B cell (primary cell): ENCODE measurements at regions of chr12 and their contacts with region 1.

Region 1: DNA sequence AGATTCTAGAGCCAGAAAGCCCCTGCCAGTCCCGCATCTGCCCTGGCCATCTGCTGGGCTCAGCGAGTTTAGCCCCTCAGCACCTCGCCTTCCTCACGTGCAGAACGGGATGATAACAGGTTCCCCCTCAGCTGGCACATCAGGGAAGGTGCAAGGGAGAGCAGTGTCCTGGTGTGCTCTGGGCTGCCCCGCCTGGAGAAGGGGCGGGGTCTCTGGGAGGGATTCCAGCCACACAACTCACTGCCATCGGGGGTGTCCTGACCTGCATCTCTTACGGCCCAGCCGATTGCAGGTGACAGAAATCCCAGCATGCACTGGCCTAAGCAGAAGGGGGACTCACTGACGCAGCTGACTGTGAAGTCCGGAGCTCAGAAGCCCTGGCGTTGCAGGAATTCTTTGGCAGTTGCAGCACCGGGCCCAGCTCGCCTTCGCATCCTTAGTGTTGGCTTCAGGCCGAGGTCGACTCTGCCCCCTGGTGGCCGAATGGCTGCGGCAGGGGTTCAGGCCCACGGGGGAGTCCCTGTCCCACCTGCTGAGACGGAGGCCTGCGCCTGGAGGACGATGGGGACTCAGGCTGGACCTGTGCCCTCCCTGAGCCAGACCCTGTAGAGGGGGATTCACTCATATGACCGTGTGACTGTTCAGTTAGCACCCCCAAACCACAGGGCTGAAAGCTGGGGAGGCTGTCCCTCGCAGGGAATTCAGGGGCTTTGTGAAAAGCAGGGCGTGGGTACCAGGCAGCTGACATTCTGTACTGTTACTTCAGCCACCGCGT is 178.6 kb downstream of the ADGRD1 start:
- DNase-seq: peak; percentile 80
- ATAC-seq: peak; percentile 68
- H3K4me3 ChIP-seq: no peak overlapping the region
- H3K4me3 Mint-ChIP-seq: no peak overlapping the region
- H3K27ac ChIP-seq: no peak overlapping the region
- H3K27ac Mint-ChIP-seq: peak overlapping the region; percentile 53
- H3K4me1 ChIP-seq: peaks cover 0 to 3% of the 10 kb centered on the region in 2 donors
- H3K4me1 Mint-ChIP-seq: no peaks in the 10 kb centered on the region
- H3K27me3 ChIP-seq: peaks cover 0 to 7% (median 0%) of the 10 kb centered on the region in 4 experiments
- H3K27me3 Mint-ChIP-seq: no peaks in the 10 kb centered on the region
- CTCF ChIP-seq: peak; percentile 91

Region 2: GRCh38 chr12:129276361-129277060 is 1855.8 kb before region 1 on chr12:
- CTCF ChIA-PET with region 1: no interaction called
- POLR2A ChIA-PET with region 1: no interaction called
- intact Hi-C with region 1: no loop called
- DNase-seq: no peak
- ATAC-seq: no peak
- H3K4me3 ChIP-seq: no peak overlapping the region
- H3K4me3 Mint-ChIP-seq: no peak overlapping the region
- H3K27ac ChIP-seq: no peak overlapping the region
- H3K27ac Mint-ChIP-seq: no peak overlapping the region
- H3K4me1 ChIP-seq: no peaks in the 10 kb centered on the region
- H3K4me1 Mint-ChIP-seq: no peaks in the 10 kb centered on the region
- H3K27me3 ChIP-seq: no peaks in the 10 kb centered on the region
- H3K27me3 Mint-ChIP-seq: no peaks in the 10 kb centered on the region
- CTCF ChIP-seq: no peak

Region 3: DNA sequence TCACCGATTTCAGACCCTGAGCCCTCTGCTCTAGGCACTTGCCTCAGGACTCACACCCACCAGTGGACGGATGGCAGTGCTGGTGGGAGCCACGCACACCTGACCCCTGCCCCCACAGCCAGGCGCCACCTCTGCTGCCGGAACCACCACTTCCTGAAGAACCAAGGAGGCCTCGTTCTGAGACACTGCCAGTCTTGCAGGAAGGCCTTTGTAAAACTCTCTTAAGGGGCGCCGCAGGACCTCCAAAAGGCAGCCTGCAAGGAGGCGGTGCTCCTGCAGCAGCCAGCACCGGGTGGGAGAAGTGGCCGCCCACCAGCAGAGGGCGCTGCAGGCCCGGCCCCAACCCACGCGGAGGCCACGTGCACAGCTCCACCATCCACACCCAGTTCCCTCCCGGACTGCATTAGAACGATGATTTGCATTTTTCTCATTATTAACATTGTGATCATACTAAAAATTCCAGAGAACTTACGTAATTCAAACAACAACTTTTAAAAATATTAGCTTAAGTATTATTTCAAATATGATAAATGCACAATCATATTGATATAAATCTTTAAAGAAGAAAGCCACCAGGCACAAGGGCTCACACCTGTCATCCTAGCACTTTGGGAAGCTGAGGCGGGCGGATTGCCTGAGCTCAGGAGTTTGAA is 306.0 kb before region 1 on chr12:
- CTCF ChIA-PET with region 1: interaction called, 19 read pairs
- POLR2A ChIA-PET with region 1: no interaction called
- intact Hi-C with region 1: no loop called
- DNase-seq: peak; percentile 48
- ATAC-seq: peak; percentile 31
- H3K4me3 ChIP-seq: no peak overlapping the region
- H3K4me3 Mint-ChIP-seq: no peak overlapping the region
- H3K27ac ChIP-seq: no peak overlapping the region
- H3K27ac Mint-ChIP-seq: no peak overlapping the region
- H3K4me1 ChIP-seq: peaks cover 0 to 5% of the 10 kb centered on the region in 2 donors
- H3K4me1 Mint-ChIP-seq: peaks cover 12% of the 10 kb centered on the region
- H3K27me3 ChIP-seq: no peaks in the 10 kb centered on the region
- H3K27me3 Mint-ChIP-seq: no peaks in the 10 kb centered on the region
- CTCF ChIP-seq: peak; percentile 75

Region 4: DNA sequence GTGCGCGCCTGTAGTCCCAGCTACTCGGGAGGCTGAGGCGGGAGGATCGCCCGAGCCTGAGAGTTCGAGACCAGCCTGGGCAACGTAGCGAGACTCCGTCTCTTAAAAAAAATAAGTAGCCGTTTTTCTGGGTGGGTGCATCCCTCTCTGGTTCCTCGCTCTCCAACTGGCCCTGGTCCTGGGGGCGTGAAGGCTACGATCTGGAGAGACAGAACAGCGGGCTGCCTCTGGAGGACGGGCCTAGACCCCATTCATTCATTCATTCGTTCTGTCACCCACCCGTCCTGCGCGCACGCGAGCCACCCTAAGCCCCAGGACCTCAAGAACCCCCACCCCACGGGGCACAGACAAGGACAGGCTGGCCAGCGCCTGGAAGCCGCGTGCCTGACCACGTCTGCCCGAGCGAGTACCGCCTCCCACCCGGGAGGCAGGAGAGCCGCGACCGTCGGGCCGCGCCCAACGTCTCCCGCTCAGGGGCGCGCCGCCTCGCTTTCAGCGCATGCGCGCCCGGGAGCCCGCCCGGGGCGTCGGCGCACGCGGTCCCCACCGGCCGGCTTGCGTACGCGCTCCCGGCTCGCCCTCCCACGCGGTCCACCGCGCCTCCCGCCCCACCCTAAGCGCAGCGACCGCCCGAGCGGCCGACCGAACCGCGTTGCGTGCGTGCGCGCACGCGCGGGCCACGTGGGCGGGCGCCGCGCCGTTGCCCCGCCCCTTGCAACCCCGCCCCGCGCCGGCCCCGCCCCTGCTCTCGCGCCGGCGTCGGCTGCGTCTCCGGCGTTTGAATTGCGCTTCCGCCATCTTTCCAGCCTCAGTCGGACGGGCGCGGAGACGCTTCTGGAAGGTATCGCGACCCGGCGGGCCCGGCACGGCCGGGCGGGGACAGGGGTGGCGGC is 260.8 kb before region 1 on chr12 and contains the start of gene RAN:
- CTCF ChIA-PET with region 1: interaction called, 6 read pairs
- POLR2A ChIA-PET with region 1: no interaction called
- intact Hi-C with region 1: loop called (anchors 1 kb)
- DNase-seq: peak; percentile 97
- ATAC-seq: peak; percentile 77
- H3K4me3 ChIP-seq: peak within 1 kb of the TSS; percentile 70 to 81 (median 73)
- H3K4me3 Mint-ChIP-seq: peak within 1 kb of the TSS; percentile 96
- H3K27ac ChIP-seq: peak within 1 kb of the TSS; percentile 78 to 84
- H3K27ac Mint-ChIP-seq: peak within 1 kb of the TSS; percentile 92
- H3K4me1 ChIP-seq: peaks cover 23 to 26% of the 10 kb centered on the region in 2 donors
- H3K4me1 Mint-ChIP-seq: peaks cover 35% of the 10 kb centered on the region
- H3K27me3 ChIP-seq: no peaks in the 10 kb centered on the region
- H3K27me3 Mint-ChIP-seq: no peaks in the 10 kb centered on the region
- CTCF ChIP-seq: no peak
- total RNA-seq, gene RAN: 289 and 298 TPM in 2 replicates

Region 5: GRCh38 chr12:130916251-130916911 is 215.9 kb before region 1 on chr12:
- CTCF ChIA-PET with region 1: interaction called, 102 read pairs
- POLR2A ChIA-PET with region 1: no interaction called
- intact Hi-C with region 1: no loop called
- DNase-seq: peak; percentile 80
- ATAC-seq: no peak
- H3K4me3 ChIP-seq: peak overlapping the region in 1 of 5 experiments; percentile 7
- H3K4me3 Mint-ChIP-seq: peak overlapping the region; percentile 59
- H3K27ac ChIP-seq: no peak overlapping the region
- H3K27ac Mint-ChIP-seq: no peak overlapping the region
- H3K4me1 ChIP-seq: peaks cover 6 to 11% of the 10 kb centered on the region in 2 donors
- H3K4me1 Mint-ChIP-seq: peaks cover 10% of the 10 kb centered on the region
- H3K27me3 ChIP-seq: peaks cover 0 to 6% (median 0%) of the 10 kb centered on the region in 4 experiments
- H3K27me3 Mint-ChIP-seq: peaks cover 48% of the 10 kb centered on the region
- CTCF ChIP-seq: peak; percentile 96

Region 6: DNA sequence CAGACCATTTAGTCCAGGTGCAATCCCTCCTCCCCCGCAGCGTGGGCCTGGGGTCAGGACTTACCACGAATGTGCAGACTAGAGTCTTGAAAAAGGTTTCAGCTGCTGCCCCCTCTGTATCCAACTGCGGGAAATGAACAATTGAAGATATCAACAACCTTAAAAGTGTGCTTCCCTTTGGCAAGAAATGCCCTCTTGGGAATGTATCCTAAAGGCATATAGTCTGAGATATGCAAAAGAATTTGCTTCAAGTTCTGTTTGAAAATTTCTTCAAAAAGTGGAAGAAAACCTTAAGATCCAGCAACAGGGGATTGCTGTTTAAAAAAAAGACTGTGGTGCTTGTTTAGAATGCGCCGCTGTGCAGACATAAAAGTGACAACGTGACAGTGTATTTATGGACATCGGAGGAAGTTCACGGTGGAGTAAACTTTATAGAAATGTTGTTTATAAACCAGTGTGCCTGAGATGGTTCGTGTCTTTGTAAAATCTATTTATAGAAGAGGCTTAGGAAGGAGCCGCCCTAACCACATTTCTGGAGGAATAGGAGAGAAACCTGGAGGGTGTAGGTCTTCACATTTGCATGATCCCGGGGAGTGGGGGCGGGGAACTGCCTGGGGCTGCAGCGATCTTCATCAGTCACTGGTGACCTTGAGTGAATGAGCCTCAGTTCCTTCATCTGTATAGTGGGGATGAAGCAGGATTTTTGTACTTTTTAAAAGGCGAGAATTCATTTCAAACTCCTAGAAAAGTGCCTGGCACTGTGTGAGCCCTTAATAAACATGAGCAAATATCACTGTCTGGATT is 151.2 kb before region 1 on chr12:
- CTCF ChIA-PET with region 1: interaction called, 10 read pairs
- POLR2A ChIA-PET with region 1: no interaction called
- intact Hi-C with region 1: no loop called
- DNase-seq: peak; percentile 51
- ATAC-seq: no peak
- H3K4me3 ChIP-seq: peak overlapping the region in 3 of 5 experiments; percentile 3 to 34 (median 22)
- H3K4me3 Mint-ChIP-seq: peak overlapping the region; percentile 64
- H3K27ac ChIP-seq: peak overlapping the region; percentile 32 to 80
- H3K27ac Mint-ChIP-seq: peak overlapping the region; percentile 90
- H3K4me1 ChIP-seq: peaks cover 37 to 40% of the 10 kb centered on the region in 2 donors
- H3K4me1 Mint-ChIP-seq: peaks cover 40% of the 10 kb centered on the region
- H3K27me3 ChIP-seq: no peaks in the 10 kb centered on the region
- H3K27me3 Mint-ChIP-seq: no peaks in the 10 kb centered on the region
- CTCF ChIP-seq: no peak

Region 7: DNA sequence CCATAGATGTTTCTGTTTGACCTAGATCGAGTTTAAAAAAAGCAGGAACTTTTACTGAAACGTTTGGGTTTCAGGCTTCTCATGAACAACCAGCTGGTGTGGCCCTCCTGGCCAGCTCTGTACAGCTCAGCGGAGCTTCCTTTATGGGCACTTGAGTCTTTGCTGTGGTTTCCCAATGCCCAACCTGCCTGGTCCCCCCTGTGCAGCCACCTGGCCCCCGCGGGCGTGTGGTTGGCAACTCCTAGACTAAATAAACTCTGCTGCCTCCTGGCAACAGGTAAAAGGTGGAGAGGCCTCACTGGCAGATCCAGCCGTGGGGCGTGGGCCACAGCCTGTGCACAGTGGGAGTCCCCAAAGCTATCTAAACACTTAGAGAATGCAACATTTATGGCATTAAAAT is 139.9 kb before region 1 on chr12:
- CTCF ChIA-PET with region 1: no interaction called
- POLR2A ChIA-PET with region 1: no interaction called
- intact Hi-C with region 1: no loop called
- DNase-seq: no peak
- ATAC-seq: no peak
- H3K4me3 ChIP-seq: no peak overlapping the region
- H3K4me3 Mint-ChIP-seq: no peak overlapping the region
- H3K27ac ChIP-seq: no peak overlapping the region
- H3K27ac Mint-ChIP-seq: no peak overlapping the region
- H3K4me1 ChIP-seq: peaks cover 0 to 6% of the 10 kb centered on the region in 2 donors
- H3K4me1 Mint-ChIP-seq: peaks cover 6% of the 10 kb centered on the region
- H3K27me3 ChIP-seq: peaks cover 0 to 6% (median 0%) of the 10 kb centered on the region in 4 experiments
- H3K27me3 Mint-ChIP-seq: peaks cover 4% of the 10 kb centered on the region
- CTCF ChIP-seq: no peak

Region 8: DNA sequence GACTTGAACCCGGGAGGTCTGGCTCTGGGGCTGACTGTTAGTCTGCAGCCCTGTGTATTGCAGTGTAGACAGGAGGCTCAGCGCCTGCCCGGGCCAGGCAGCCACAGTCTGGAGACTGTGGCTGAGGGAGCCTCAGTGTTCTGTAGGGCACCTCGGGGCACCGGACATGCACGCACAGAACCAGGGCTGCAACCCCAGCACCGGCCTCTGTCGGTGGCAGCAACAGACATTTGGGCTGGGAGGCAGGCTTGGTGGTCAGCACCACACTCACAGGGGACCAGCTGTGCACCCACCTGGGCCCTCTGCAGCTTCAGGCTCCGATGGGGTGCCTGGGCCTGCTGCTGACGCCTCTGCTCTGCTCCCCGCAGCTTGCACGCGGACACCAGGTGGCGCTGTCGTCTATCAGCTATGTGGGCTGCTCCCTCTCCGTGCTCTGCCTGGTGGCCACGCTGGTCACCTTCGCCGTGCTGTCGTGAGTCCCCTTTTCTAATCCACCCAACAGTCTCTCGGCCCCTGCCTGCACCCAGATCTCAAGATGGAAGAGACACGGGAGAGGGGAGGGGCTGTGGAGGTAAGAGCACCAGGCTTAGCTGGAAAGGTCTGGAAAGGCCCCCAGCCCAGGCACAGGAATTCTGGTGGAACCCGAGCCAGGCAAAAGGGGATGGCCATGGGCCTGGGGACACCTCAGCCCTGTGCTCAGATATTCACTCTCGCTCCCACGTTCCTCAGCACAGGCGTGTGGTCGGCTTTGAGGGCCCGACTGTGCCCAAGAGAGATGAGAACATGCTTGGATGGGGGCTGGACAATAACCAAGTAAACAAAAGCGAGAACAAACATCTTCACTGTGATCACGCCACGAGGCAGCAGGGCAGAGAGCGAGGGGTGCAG is 27.6 kb before region 1 on chr12:
- CTCF ChIA-PET with region 1: interaction called, 18 read pairs
- POLR2A ChIA-PET with region 1: no interaction called
- intact Hi-C with region 1: no loop called
- DNase-seq: peak; percentile 78
- ATAC-seq: peak; percentile 77
- H3K4me3 ChIP-seq: no peak overlapping the region
- H3K4me3 Mint-ChIP-seq: no peak overlapping the region
- H3K27ac ChIP-seq: no peak overlapping the region
- H3K27ac Mint-ChIP-seq: no peak overlapping the region
- H3K4me1 ChIP-seq: peaks cover 14 to 47% of the 10 kb centered on the region in 2 donors
- H3K4me1 Mint-ChIP-seq: peaks cover 17% of the 10 kb centered on the region
- H3K27me3 ChIP-seq: no peaks in the 10 kb centered on the region
- H3K27me3 Mint-ChIP-seq: peaks cover 4% of the 10 kb centered on the region
- CTCF ChIP-seq: peak; percentile 87

Region 9: GRCh38 chr12:131152587-131152986 is 20.3 kb after region 1 on chr12:
- CTCF ChIA-PET with region 1: no interaction called
- POLR2A ChIA-PET with region 1: no interaction called
- intact Hi-C with region 1: no loop called
- DNase-seq: no peak
- ATAC-seq: no peak
- H3K4me3 ChIP-seq: no peak overlapping the region
- H3K4me3 Mint-ChIP-seq: no peak overlapping the region
- H3K27ac ChIP-seq: no peak overlapping the region
- H3K27ac Mint-ChIP-seq: no peak overlapping the region
- H3K4me1 ChIP-seq: no peaks in the 10 kb centered on the region
- H3K4me1 Mint-ChIP-seq: peaks cover 2% of the 10 kb centered on the region
- H3K27me3 ChIP-seq: no peaks in the 10 kb centered on the region
- H3K27me3 Mint-ChIP-seq: peaks cover 31% of the 10 kb centered on the region
- CTCF ChIP-seq: no peak

Region 10: DNA sequence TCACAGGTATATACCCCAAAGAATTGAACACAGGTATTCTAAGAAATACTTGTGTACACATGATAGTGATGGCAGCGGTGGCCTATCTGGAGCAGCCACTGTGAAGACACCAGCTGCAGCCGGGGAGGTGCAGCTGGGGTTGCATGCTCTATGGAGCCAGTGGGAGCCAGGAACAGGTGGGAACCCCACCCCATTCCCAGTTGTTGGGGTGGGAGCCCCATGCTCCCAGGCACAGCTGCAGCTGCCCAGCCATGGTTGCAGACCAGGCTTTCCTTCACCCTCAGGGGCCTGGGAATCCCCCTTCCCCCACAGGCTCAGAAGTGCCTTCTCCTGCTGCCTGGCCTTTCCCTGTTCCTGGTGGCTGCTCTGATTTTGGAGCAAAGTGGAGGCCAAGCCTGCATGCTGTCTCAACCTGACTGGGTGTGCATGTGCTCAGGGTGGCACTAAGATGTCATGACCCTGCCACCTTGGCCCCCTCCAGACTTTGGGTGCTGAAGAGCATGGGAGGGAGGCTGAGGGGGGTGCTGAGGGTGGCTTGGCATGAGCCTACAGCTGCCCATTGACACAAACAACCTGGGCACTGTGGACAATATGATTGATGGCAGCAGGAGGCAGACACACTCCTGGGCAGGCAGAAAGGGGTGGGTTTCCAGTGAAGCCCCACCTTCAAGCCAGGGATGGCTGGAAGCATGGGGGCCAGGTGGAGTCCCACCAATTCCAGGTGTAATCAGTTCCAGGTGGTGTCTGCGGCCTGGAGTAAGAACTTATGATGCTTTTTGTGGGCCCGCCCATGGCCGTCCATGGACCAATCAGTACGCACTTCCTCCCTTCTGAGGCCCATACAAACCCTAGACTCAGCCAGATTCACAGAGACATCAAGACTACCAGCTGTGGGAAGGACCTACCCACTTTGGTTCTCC is 56.1 kb after region 1 on chr12:
- CTCF ChIA-PET with region 1: no interaction called
- POLR2A ChIA-PET with region 1: no interaction called
- intact Hi-C with region 1: no loop called
- DNase-seq: no peak
- ATAC-seq: no peak
- H3K4me3 ChIP-seq: no peak overlapping the region
- H3K4me3 Mint-ChIP-seq: no peak overlapping the region
- H3K27ac ChIP-seq: no peak overlapping the region
- H3K27ac Mint-ChIP-seq: no peak overlapping the region
- H3K4me1 ChIP-seq: no peaks in the 10 kb centered on the region
- H3K4me1 Mint-ChIP-seq: no peaks in the 10 kb centered on the region
- H3K27me3 ChIP-seq: peaks cover 0 to 3% (median 0%) of the 10 kb centered on the region in 4 experiments
- H3K27me3 Mint-ChIP-seq: no peaks in the 10 kb centered on the region
- CTCF ChIP-seq: no peak